Caco-2 (cell line): ENCODE measurements at regions of chr18 and their contacts with region 1.

Region 1: DNA sequence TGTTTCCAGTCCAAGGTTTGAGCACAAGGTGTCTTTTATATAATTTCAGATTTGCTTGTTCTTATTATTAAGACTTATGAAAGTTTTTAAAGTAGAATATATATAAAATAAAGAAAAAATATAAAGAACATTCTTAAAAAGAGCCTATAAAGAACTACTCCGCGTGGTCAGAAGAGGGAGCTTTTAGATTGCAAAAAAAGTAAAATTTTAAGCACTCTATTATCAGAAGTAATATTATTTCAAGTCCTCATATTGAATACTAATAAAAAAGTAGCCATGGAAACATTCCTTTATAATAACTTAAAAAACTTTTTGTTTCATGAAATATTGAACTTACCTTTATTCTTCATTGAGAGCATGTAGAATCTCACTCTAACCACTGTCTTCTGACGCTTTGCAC is 51.4 kb downstream of the LINC00305 start:
- DNase-seq: no peak
- H3K4me3 ChIP-seq: no peak overlapping the region
- H3K4me3 Mint-ChIP-seq: no peak overlapping the region
- H3K27ac Mint-ChIP-seq: no peak overlapping the region
- H3K4me1 ChIP-seq: no peaks in the 10 kb centered on the region
- H3K4me1 Mint-ChIP-seq: peaks cover 6% of the 10 kb centered on the region
- H3K27me3 ChIP-seq: no peaks in the 10 kb centered on the region
- H3K27me3 Mint-ChIP-seq: no peaks in the 10 kb centered on the region
- CTCF ChIP-seq: no peak

Region 2: DNA sequence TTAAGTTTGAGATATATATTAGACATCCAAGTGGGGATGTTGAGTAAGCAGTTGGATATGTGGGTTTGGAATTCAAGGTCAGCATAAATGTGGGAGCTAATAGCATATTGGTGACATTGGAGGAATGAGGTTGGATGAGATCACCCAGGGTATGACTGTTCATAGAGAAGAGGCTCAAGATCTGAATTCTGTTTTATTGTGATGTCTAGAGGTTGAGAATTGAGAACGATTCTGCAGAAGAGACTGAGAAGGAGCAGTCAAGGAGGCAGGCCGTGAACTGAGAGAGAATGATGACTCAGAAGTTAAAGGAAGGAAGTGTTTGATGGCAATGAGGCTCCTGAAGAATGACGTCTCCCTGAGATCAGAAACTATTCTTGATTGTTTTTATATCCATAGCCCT is 388.8 kb before region 1 on chr18:
- CTCF ChIA-PET with region 1: no interaction called
- POLR2A ChIA-PET with region 1: no interaction called
- intact Hi-C with region 1: no loop called
- DNase-seq: no peak
- H3K4me3 ChIP-seq: no peak overlapping the region
- H3K4me3 Mint-ChIP-seq: no peak overlapping the region
- H3K27ac Mint-ChIP-seq: no peak overlapping the region
- H3K4me1 ChIP-seq: no peaks in the 10 kb centered on the region
- H3K4me1 Mint-ChIP-seq: no peaks in the 10 kb centered on the region
- H3K27me3 ChIP-seq: no peaks in the 10 kb centered on the region
- H3K27me3 Mint-ChIP-seq: no peaks in the 10 kb centered on the region
- CTCF ChIP-seq: no peak

Region 3: DNA sequence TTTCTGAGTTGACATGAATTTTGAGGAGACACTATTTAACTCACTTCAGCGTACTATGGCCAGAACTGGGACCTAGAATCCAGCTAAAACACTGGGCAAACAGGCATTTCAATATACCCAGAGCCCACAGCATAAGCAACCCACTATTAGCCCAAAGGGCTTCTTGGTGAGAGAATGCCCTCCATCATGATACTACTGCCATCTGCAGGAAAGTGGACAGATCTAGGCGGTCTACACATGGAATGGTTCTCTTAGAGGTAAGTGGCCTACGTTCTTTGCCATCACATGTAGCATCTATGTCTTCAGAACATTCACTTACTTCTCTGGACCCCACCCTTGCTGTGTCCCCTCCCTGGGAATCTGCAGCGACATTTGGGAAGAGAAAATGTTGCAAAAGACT is 232.7 kb after region 1 on chr18:
- CTCF ChIA-PET with region 1: no interaction called
- POLR2A ChIA-PET with region 1: no interaction called
- intact Hi-C with region 1: loop called (anchors 10 kb)
- DNase-seq: peak in 1 of 2 experiments; percentile 21
- H3K4me3 ChIP-seq: no peak overlapping the region
- H3K4me3 Mint-ChIP-seq: no peak overlapping the region
- H3K27ac Mint-ChIP-seq: no peak overlapping the region
- H3K4me1 ChIP-seq: no peaks in the 10 kb centered on the region
- H3K4me1 Mint-ChIP-seq: no peaks in the 10 kb centered on the region
- H3K27me3 ChIP-seq: no peaks in the 10 kb centered on the region
- H3K27me3 Mint-ChIP-seq: no peaks in the 10 kb centered on the region
- CTCF ChIP-seq: peak in 1 of 2 experiments; percentile 5

Region 4: GRCh38 chr18:64416990-64417389 is 319.5 kb after region 1 on chr18:
- CTCF ChIA-PET with region 1: no interaction called
- POLR2A ChIA-PET with region 1: no interaction called
- intact Hi-C with region 1: loop called (anchors 10 kb)
- DNase-seq: no peak
- H3K4me3 ChIP-seq: no peak overlapping the region
- H3K4me3 Mint-ChIP-seq: no peak overlapping the region
- H3K27ac Mint-ChIP-seq: no peak overlapping the region
- H3K4me1 ChIP-seq: no peaks in the 10 kb centered on the region
- H3K4me1 Mint-ChIP-seq: no peaks in the 10 kb centered on the region
- H3K27me3 ChIP-seq: no peaks in the 10 kb centered on the region
- H3K27me3 Mint-ChIP-seq: no peaks in the 10 kb centered on the region
- CTCF ChIP-seq: no peak

Region 5: GRCh38 chr18:65091744-65092329 is 994.3 kb after region 1 on chr18:
- CTCF ChIA-PET with region 1: no interaction called
- POLR2A ChIA-PET with region 1: no interaction called
- intact Hi-C with region 1: loop called (anchors 5 kb)
- DNase-seq: peak in 1 of 2 experiments; percentile 2
- H3K4me3 ChIP-seq: no peak overlapping the region
- H3K4me3 Mint-ChIP-seq: no peak overlapping the region
- H3K27ac Mint-ChIP-seq: no peak overlapping the region
- H3K4me1 ChIP-seq: no peaks in the 10 kb centered on the region
- H3K4me1 Mint-ChIP-seq: no peaks in the 10 kb centered on the region
- H3K27me3 ChIP-seq: no peaks in the 10 kb centered on the region
- H3K27me3 Mint-ChIP-seq: no peaks in the 10 kb centered on the region
- CTCF ChIP-seq: peak in 1 of 2 experiments; percentile 48